Naive thymus-derived CD4-positive, alpha-beta T cell (primary cell): ENCODE measurements at regions of chr10 and their contacts with region 1.

Region 1: GRCh38 chr10:119686439-119687191 is 35.4 kb downstream of the BAG3 start:
- DNase-seq: peak; percentile 62 to 80 (median 75)
- ATAC-seq: peak; percentile 92
- H3K4me3 ChIP-seq: peak overlapping the region; percentile 58
- H3K4me3 Mint-ChIP-seq: peak overlapping the region; percentile 51 to 86 (median 76)
- H3K27ac ChIP-seq: peak overlapping the region; percentile 40
- H3K27ac Mint-ChIP-seq: peak overlapping the region in 8 of 9 donors; percentile 2 to 87 (median 63)
- H3K4me1 ChIP-seq: peaks cover 0 to 6% of the 10 kb centered on the region in 2 donors
- H3K4me1 Mint-ChIP-seq: peaks cover 12 to 25% (median 21%) of the 10 kb centered on the region in 7 donors
- H3K27me3 ChIP-seq: no peaks in the 10 kb centered on the region
- H3K27me3 Mint-ChIP-seq: peaks cover 0 to 3% (median 0%) of the 10 kb centered on the region in 5 donors

Region 2: GRCh38 chr10:117710181-117710798 is 1976.3 kb before region 1 on chr10:
- CTCF ChIA-PET with region 1: no interaction called
- POLR2A ChIA-PET with region 1: no interaction called
- intact Hi-C with region 1: no loop called
- DNase-seq: no peak
- ATAC-seq: no peak
- H3K4me3 ChIP-seq: no peak overlapping the region
- H3K4me3 Mint-ChIP-seq: no peak overlapping the region
- H3K27ac ChIP-seq: no peak overlapping the region
- H3K27ac Mint-ChIP-seq: no peak overlapping the region
- H3K4me1 ChIP-seq: no peaks in the 10 kb centered on the region
- H3K4me1 Mint-ChIP-seq: no peaks in the 10 kb centered on the region
- H3K27me3 ChIP-seq: no peaks in the 10 kb centered on the region
- H3K27me3 Mint-ChIP-seq: peaks cover 5 to 29% (median 9%) of the 10 kb centered on the region in 5 donors

Region 3: GRCh38 chr10:119608316-119609155 is 78.1 kb before region 1 on chr10:
- CTCF ChIA-PET with region 1: interaction called, 6 read pairs
- POLR2A ChIA-PET with region 1: no interaction called
- intact Hi-C with region 1: loop called in 1 of 2 experiments (anchors 2 kb)
- DNase-seq: peak in 6 of 9 donors; percentile 13 to 33 (median 26)
- ATAC-seq: peak; percentile 57
- H3K4me3 ChIP-seq: no peak overlapping the region
- H3K4me3 Mint-ChIP-seq: peak overlapping the region in 9 of 10 donors; percentile 42 to 67 (median 58)
- H3K27ac ChIP-seq: no peak overlapping the region
- H3K27ac Mint-ChIP-seq: peak overlapping the region in 1 of 9 donors; percentile 54
- H3K4me1 ChIP-seq: no peaks in the 10 kb centered on the region
- H3K4me1 Mint-ChIP-seq: peaks cover 3 to 12% (median 10%) of the 10 kb centered on the region in 7 donors
- H3K27me3 ChIP-seq: no peaks in the 10 kb centered on the region
- H3K27me3 Mint-ChIP-seq: peaks cover 0 to 18% (median 0%) of the 10 kb centered on the region in 5 donors

Region 4: GRCh38 chr10:119658253-119658673 is 28.4 kb before region 1 on chr10:
- CTCF ChIA-PET with region 1: interaction called, 3 read pairs
- POLR2A ChIA-PET with region 1: interaction called, 3 read pairs
- intact Hi-C with region 1: loop called (anchors 1 kb)
- DNase-seq: no peak
- ATAC-seq: no peak
- H3K4me3 ChIP-seq: no peak overlapping the region
- H3K4me3 Mint-ChIP-seq: peak overlapping the region in 3 of 10 donors; percentile 32 to 59 (median 37)
- H3K27ac ChIP-seq: no peak overlapping the region
- H3K27ac Mint-ChIP-seq: peak overlapping the region in 5 of 9 donors; percentile 22 to 91 (median 36)
- H3K4me1 ChIP-seq: peaks cover 22 to 48% of the 10 kb centered on the region in 2 donors
- H3K4me1 Mint-ChIP-seq: peaks cover 44 to 94% (median 87%) of the 10 kb centered on the region in 7 donors
- H3K27me3 ChIP-seq: no peaks in the 10 kb centered on the region
- H3K27me3 Mint-ChIP-seq: no peaks in the 10 kb centered on the region

Region 5: DNA sequence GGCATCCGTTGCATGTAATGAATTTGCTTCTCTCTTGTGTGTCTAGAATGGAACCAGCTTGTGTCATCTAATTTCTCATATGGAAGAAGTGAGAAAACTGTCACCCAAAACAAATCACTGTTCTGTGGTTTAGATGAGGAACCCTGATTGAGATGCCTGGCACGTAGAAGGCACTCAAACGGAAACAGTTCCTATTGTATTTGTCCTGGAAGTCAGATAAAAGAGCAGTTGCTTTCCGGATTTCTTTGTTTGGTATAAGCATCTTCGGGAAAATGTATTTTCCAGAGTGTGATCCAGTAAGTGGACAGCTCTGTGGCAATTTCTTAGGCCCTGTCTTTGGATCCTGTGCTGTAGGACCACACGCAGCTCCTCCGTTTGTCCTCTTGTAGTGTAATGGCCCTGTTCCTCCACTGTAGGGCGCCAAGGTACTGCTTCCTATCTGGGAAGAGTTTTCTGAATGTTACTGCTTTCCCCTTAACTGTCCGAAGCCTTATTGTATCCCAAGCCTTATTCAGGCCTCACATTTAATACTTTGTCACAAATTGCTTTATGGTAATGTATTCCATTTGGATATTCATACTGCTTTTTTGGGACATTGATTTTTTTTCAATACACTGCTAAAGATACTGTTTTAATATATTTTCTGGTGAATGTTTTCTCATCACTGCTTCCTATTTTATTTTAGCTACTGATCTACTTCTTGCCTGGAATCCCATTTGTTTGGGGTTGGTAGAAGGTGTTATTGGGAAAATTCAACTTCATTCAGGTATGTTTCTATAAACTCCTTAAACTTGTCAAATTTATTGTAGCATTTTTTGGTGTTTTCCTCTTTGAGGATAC is 64.0 kb after region 1 on chr10:
- CTCF ChIA-PET with region 1: interaction called, 8 read pairs
- POLR2A ChIA-PET with region 1: no interaction called
- intact Hi-C with region 1: loop called (anchors 1 kb)
- DNase-seq: peak; percentile 14 to 59 (median 44)
- ATAC-seq: peak; percentile 99
- H3K4me3 ChIP-seq: no peak overlapping the region
- H3K4me3 Mint-ChIP-seq: peak overlapping the region in 1 of 10 donors; percentile 9
- H3K27ac ChIP-seq: no peak overlapping the region
- H3K27ac Mint-ChIP-seq: peak overlapping the region in 2 of 9 donors; percentile 1 to 11
- H3K4me1 ChIP-seq: no peaks in the 10 kb centered on the region
- H3K4me1 Mint-ChIP-seq: peaks cover 5 to 18% (median 12%) of the 10 kb centered on the region in 7 donors
- H3K27me3 ChIP-seq: no peaks in the 10 kb centered on the region
- H3K27me3 Mint-ChIP-seq: no peaks in the 10 kb centered on the region

Region 6: GRCh38 chr10:119917750-119918149 is 231.1 kb after region 1 on chr10:
- CTCF ChIA-PET with region 1: no interaction called
- POLR2A ChIA-PET with region 1: no interaction called
- intact Hi-C with region 1: loop called in 1 of 2 experiments (anchors 1 kb)
- DNase-seq: no peak
- ATAC-seq: no peak
- H3K4me3 ChIP-seq: no peak overlapping the region
- H3K4me3 Mint-ChIP-seq: no peak overlapping the region
- H3K27ac ChIP-seq: no peak overlapping the region
- H3K27ac Mint-ChIP-seq: no peak overlapping the region
- H3K4me1 ChIP-seq: no peaks in the 10 kb centered on the region
- H3K4me1 Mint-ChIP-seq: peaks cover 0 to 23% (median 5%) of the 10 kb centered on the region in 7 donors
- H3K27me3 ChIP-seq: no peaks in the 10 kb centered on the region
- H3K27me3 Mint-ChIP-seq: no peaks in the 10 kb centered on the region